ENCODE measurements at regions of chr14 and their contacts with region 1.

Region 1: GRCh38 chr14:36604757-36605505 is 22.5 kb upstream of the NKX2-8 start:
- DNase-seq: peak in 3 of 6 donors; percentile 31 to 61 (median 37)
- ATAC-seq: peak; percentile 76 to 98 (median 93)
- H3K4me3 ChIP-seq: no peak overlapping the region
- H3K27ac ChIP-seq: no peak overlapping the region
- H3K4me1 ChIP-seq: no peaks in the 10 kb centered on the region
- H3K27me3 ChIP-seq: no peaks in the 10 kb centered on the region
- CTCF ChIP-seq: peak; percentile 57 to 77 (median 70)

Region 2: GRCh38 chr14:36553656-36554260 is 51.2 kb before region 1 on chr14:
- intact Hi-C with region 1: loop called in 1 of 3 experiments (anchors 10 kb)
- DNase-seq: peak in 1 of 6 donors; percentile 30
- ATAC-seq: peak; percentile 58 to 89 (median 82)
- H3K4me3 ChIP-seq: no peak overlapping the region
- H3K27ac ChIP-seq: no peak overlapping the region
- H3K4me1 ChIP-seq: no peaks in the 10 kb centered on the region
- H3K27me3 ChIP-seq: no peaks in the 10 kb centered on the region
- CTCF ChIP-seq: peak; percentile 18 to 59 (median 46)